ENCODE measurements at regions of chr1 and their contacts with region 1.

Region 1: DNA sequence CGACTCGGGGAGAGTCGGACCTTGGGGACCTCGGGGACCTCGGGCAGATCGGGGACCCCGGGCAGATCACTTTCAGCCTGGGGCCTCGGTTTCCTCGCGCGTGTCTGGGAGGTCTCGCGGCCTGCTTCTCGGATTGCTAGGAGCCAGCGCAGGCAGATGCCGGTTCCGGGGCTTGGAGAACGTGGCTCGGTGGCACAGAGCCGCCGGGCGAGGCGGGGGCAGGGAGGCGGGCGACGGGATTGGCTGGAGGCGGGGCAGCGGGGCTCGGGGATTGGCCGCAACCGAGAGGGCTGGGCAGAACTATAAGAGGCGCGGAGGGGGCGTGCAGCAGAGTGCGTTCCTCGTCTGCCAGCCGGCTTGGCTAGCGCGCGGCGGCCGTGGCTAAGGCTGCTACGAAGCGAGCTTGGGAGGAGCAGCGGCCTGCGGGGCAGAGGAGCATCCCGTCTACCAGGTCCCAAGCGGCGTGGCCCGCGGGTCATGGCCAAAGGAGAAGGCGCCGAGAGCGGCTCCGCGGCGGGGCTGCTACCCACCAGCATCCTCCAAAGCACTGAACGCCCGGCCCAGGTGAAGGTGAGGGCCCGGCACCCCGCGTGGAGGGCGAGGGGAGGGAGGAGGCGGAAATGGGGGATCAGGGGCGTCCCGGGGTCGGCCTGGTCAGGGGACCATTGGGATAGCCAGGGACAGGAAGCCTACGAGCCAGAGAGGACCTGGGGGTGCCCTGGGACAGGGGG is at the start of gene MFSD2A:
- DNase-seq: peak; percentile 81
- H3K4me3 Mint-ChIP-seq: peak within 1 kb of the TSS; percentile 95
- H3K27ac Mint-ChIP-seq: peak within 1 kb of the TSS; percentile 92
- H3K4me1 Mint-ChIP-seq: peaks cover 52% of the 10 kb centered on the region
- H3K27me3 Mint-ChIP-seq: peaks cover 7% of the 10 kb centered on the region
- total RNA-seq, gene MFSD2A: 43.3 and 47.8 TPM in 2 replicates

Region 2: DNA sequence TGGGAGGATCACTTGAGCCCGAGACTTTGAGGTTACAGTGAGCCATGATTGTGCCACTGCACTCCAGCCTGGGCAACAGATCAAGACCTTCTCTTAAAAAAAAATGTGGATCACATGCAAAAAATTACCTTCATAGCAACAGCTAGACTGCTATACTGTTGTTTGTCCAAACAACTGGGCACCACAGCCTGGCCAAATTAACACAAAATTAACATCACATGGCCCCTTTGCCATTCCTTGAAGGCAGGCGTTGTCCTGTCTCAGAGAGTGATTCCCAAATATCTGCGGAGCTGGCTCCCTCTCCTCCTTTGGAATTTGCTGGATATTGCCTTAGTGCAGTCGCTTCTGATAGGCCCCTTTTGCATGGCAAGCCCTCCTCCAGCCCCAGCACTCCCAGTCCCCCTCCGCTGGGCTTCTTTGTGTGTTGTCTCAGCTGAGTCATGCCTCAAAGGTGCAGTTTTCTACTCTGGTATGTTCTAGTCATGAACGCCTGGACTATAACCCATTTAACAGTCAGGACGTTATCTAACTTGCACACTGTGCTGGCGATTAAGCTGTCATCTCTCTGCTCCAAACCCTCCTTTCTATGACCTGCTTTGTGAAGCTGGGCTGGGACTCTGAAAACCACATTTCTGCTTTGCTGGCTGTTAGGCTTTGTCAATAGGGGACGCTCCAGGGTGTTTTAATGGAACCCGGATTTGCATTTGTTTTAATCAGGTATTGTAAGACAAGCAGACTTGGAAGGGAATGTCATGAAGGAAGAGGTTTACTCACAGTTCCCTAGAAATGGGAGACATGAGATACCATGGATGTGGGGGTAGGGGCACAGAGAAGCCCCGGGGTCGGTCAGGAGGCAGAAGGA is 243.6 kb before region 1 on chr1:
- intact Hi-C with region 1: no loop called
- DNase-seq: peak; percentile 3
- H3K4me3 Mint-ChIP-seq: no peak overlapping the region
- H3K27ac Mint-ChIP-seq: no peak overlapping the region
- H3K4me1 Mint-ChIP-seq: no peaks in the 10 kb centered on the region
- H3K27me3 Mint-ChIP-seq: peaks cover 27% of the 10 kb centered on the region

Region 3: GRCh38 chr1:39933956-39934941 is 20.7 kb before region 1 on chr1:
- intact Hi-C with region 1: no loop called
- DNase-seq: no peak
- H3K4me3 Mint-ChIP-seq: no peak overlapping the region
- H3K27ac Mint-ChIP-seq: no peak overlapping the region
- H3K4me1 Mint-ChIP-seq: peaks cover 4% of the 10 kb centered on the region
- H3K27me3 Mint-ChIP-seq: peaks cover 8% of the 10 kb centered on the region

Region 4: GRCh38 chr1:40014812-40015594 is 60.0 kb after region 1 on chr1:
- intact Hi-C with region 1: loop called (anchors 2 kb)
- DNase-seq: no peak
- H3K4me3 Mint-ChIP-seq: no peak overlapping the region
- H3K27ac Mint-ChIP-seq: no peak overlapping the region
- H3K4me1 Mint-ChIP-seq: peaks cover 11% of the 10 kb centered on the region
- H3K27me3 Mint-ChIP-seq: peaks cover 10% of the 10 kb centered on the region